AG04449 (cell line): ENCODE measurements at regions of chr12 and their contacts with region 1.

Region 1: DNA sequence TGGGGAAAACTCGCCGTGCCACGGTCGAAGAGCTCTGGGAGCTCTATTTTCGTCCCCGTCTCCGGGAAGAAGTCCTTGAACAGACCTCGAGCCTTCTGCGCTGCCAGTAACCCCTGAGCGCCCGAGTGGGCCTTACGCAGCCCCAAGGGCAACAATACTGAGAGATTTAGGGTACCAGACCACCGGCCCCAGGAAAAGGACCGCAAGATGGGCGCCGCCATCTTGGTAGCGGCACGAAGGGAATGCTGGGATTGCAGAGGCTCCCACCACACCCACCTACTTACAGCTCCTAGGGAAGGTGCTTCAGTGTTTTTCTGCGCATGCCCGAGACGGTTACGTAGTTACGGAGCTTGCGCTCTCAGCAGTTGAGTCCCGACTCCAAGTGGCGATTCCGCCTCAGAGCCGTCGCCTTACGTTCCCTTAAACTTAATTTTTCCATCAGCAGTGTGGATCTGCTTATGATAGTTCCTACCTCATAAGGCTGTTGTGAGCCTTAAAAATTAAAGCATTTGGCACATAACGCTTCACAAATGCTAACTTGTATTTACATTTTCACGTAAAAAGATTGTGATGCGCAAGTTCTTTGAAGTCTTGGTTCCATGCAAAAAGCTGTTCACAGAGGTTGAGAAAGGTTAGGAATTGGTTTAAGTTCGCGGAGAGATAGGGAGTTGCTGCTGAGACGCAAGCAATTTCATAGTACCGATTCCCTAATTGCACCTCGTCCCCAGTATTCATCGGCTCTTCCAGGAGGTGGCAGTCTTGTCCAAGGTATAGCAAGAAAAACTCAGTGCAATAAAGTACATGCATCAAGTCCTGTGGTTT is at the start of gene YARS2:
- DNase-seq: peak; percentile 94
- H3K4me3 ChIP-seq: peak within 1 kb of the TSS; percentile 98
- CTCF ChIP-seq: peak; percentile 77

Region 2: DNA sequence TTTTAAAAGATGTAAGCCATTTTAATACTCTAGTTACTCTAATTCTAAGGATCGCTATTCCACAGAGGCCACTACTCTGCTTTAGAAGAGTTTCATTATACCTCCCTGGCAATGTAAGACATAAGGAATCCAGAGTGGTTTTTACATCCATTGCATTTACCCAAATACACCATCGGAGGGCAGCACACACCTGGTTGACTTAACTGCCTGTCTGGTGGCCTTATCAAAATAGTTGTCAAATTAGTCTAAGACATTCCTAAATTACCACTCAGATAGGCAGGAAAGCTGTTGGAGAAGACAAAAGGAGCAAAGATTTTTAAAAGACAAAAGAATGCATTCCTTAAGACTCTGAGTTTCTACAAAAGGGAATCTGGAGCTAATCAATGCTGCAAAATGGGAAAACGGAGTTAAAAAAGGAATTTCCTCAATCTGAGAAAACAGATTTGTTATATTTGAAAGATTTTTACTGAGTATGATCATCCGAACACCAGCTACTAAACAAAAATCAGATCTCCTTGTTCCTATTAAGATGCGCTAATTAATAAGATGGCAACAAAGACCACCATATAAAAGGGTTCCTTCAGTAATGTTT is 390.3 kb before region 1 on chr12:
- CTCF ChIA-PET with region 1: interaction called, 14 read pairs
- POLR2A ChIA-PET with region 1: no interaction called
- DNase-seq: peak; percentile 33
- H3K4me3 ChIP-seq: no peak overlapping the region
- CTCF ChIP-seq: peak; percentile 75

Region 3: DNA sequence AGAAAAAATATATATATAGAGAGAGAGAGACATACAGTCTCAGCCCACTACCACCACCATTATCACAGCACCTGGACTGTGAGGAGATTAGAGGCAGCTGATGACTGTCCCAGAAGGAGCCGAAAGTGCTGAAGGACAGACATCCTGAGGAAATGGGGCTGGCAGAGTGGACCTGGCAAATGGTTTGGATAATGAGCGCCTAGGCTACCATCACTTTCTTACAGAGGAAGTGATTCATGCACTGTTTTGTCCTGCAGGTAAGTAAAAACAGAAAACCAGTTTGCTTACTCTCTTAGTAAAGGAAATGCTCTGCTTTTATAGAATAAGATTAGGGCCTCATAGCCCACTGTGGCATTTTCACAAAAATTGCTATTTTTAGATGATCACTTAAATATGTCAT is 105.4 kb before region 1 on chr12:
- CTCF ChIA-PET with region 1: no interaction called
- POLR2A ChIA-PET with region 1: no interaction called
- DNase-seq: no peak
- H3K4me3 ChIP-seq: no peak overlapping the region
- CTCF ChIP-seq: no peak

Region 4: DNA sequence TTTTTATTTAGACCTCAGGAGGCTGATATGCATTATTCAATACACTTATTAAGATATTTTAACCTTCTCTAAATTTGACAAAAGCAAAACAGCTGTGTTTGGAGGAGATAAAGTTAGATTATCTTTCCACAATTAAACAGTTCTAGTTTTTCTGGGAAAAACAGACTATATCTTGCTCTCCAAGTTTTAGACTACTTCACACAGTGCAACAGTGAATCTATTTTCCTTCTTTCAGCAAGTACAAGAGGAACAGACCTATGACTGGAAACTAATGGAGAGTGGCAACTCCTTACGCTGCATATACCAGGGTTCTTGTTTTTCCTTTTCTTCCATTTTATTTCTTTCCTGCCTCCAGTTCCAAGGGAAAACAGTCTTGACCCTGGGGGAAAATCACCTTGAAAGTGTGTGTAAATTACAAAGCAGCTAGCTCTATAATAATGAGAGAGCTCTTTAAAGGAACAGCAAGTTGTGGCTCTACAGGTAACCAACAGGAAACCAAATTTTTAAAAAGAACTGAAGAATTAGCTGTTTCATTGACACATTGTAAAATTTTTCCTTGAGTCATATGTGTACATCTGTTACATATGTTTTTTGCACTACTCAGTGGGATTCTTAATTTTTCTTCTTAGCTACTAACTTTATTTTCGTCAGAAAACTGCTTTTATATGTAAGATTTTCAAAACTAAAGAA is 49.4 kb before region 1 on chr12:
- CTCF ChIA-PET with region 1: interaction called, 11 read pairs
- POLR2A ChIA-PET with region 1: no interaction called
- DNase-seq: no peak
- H3K4me3 ChIP-seq: no peak overlapping the region
- CTCF ChIP-seq: no peak

Region 5: DNA sequence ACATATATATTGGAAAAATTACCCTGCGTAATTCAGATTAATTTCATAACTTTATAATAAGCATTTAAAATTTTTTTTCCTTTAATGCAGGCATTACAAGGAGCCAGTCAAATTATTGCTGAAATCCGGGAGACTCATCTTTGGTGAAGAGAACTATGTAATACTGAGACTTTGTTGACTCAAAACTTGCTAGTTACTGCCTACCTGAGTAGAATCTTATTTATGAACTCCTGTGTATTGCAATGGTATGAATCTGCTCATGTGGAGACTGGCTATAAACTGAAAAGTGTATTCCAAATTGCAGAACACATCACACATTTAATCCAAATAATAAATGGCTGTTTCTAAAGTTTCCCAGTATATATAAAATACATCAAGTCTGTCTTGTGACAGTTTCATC is 12.6 kb before region 1 on chr12:
- CTCF ChIA-PET with region 1: interaction called, 43 read pairs
- POLR2A ChIA-PET with region 1: interaction called, 3 read pairs
- DNase-seq: no peak
- H3K4me3 ChIP-seq: no peak overlapping the region
- CTCF ChIP-seq: no peak

Region 6: DNA sequence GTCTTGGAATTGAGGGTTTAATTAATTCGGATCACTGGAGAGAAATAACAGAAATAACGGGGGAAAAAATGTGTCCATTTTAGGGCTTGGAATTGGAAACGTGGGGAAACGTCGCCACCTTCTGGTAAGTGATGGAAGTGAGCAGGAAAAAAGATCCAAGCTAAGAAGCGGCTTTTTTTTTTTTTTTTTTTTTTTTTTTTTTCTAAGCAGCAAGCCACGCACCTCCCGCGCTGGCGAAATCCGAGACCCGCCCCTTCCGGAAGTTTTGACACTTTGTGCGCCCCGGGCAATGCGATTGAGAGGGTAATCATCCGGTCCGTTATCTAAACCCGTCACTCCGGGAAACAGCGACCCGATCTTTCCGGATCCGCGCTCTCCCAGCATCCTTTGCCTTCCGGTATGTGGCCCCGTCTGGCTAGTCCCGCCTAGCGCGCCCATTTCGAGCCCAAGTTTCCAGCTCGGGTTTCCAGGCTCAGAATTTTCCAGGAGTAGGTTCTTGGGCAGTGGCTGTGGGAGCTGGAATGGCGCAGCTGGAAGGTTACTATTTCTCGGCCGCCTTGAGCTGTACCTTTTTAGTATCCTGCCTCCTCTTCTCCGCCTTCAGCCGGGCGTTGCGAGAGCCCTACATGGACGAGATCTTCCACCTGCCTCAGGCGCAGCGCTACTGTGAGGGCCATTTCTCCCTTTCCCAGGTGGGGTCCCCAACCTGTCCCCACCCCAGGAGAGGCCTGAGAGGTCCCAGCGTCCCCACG is 1266.4 kb after region 1 on chr12 and contains the start of gene ALG10:
- CTCF ChIA-PET with region 1: interaction called, 92 read pairs
- POLR2A ChIA-PET with region 1: interaction called, 13 read pairs
- DNase-seq: peak; percentile 86
- H3K4me3 ChIP-seq: peak within 1 kb of the TSS; percentile 78
- CTCF ChIP-seq: peak; percentile 39